Panc1 (cell line): ENCODE measurements at regions of chr6 and their contacts with region 1.

Region 1: DNA sequence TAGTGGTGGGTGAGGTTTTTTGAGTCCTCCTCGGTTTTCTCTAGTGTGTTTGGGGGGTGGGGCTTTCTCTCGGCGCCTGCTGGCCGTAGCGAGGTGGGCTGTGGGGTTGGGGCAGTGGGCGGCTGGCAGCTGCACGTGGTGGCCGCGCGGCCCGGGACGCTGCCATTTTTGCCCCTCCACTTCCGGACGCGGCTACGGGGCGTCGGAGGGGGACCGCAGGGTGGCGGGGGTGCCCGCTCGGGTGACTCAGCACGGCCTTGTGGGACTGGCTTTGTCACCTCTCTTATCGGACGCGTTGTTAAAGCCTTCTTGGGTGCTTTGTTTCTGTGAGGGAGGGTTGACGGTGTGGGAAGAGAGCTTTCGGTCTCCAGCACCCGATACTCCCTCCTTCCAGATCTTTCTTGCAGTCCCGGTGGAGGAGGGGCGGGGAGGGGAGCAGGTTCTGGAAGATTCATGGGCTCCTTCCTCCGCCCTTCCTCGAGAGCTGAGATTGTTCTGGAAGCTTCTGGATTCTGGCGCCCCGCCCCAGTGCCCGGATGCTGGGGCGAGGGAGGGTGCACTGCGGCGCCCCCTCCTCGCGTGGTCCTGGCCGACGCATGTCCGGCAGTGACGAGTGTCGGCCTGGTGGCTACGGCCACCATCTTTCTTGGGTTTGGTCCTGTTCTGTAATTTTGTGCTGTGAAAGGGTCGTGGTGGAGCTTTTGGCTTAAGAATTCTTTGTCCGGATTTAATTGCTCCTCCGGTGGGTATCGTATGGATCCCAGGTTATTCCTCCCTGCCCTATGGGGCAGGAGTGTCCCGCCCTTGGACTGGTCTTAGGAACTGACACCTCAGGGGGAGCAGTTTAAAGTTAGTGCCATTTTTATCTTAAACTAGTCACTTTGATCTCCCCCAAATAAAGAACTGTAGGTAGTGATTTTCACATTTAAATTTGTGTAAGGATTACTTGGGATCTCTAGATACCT is 719 bp downstream of the HSP90AB1 start:
- DNase-seq: no peak
- ATAC-seq: peak; percentile 58
- H3K4me3 ChIP-seq: peak overlapping the region; percentile 99 to 100
- H3K27ac ChIP-seq: peak overlapping the region; percentile 100
- H3K4me1 ChIP-seq: peaks cover 34% of the 10 kb centered on the region
- H3K27me3 ChIP-seq: no peaks in the 10 kb centered on the region
- CTCF ChIP-seq: no peak

Region 2: GRCh38 chr6:43809417-43810291 is 438.0 kb before region 1 on chr6:
- CTCF ChIA-PET with region 1: no interaction called
- POLR2A ChIA-PET with region 1: no interaction called
- in situ Hi-C with region 1: no loop called
- intact Hi-C with region 1: no loop called
- DNase-seq: no peak
- ATAC-seq: no peak
- H3K4me3 ChIP-seq: no peak overlapping the region
- H3K27ac ChIP-seq: no peak overlapping the region
- H3K4me1 ChIP-seq: no peaks in the 10 kb centered on the region
- H3K27me3 ChIP-seq: no peaks in the 10 kb centered on the region
- CTCF ChIP-seq: no peak

Region 3: GRCh38 chr6:44161997-44162338 is 85.7 kb before region 1 on chr6:
- CTCF ChIA-PET with region 1: interaction called, 4 read pairs
- POLR2A ChIA-PET with region 1: interaction called, 10 read pairs
- in situ Hi-C with region 1: no loop called
- intact Hi-C with region 1: no loop called
- DNase-seq: no peak
- ATAC-seq: 0 out of 2 replicates have a peak, but pooled peaks have one; percentile 5
- H3K4me3 ChIP-seq: no peak overlapping the region
- H3K27ac ChIP-seq: no peak overlapping the region
- H3K4me1 ChIP-seq: peaks cover 7% of the 10 kb centered on the region
- H3K27me3 ChIP-seq: no peaks in the 10 kb centered on the region
- CTCF ChIP-seq: no peak